ENCODE measurements at regions of chr5 and their contacts with region 1.

Region 1: DNA sequence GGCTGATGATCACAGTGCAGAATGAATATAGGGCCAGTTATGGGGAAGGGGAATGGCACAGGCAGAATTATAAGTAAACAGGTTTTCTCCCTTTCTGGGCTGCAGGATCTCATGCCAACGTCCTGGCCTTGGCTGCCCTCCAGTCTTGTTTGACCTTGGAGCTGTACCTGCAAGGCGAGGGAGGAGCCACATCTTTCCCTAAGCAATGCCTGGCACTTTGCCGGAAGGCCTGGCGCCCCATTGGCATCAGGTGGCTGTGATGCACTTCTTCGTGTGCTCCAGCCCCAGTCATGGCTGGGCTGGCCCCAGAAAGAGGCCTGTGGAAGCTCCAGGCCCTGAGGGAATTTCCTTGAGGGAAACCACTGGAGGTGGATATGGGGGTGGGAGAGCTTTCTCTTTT is 16.7 kb upstream of the IQGAP2 start:
- DNase-seq: no peak
- ATAC-seq: no peak
- H3K4me3 ChIP-seq: no peak overlapping the region
- H3K27ac ChIP-seq: no peak overlapping the region
- H3K4me1 ChIP-seq: peaks cover 86% of the 10 kb centered on the region
- H3K27me3 ChIP-seq: no peaks in the 10 kb centered on the region
- CTCF ChIP-seq: no peak
- EP300 ChIP-seq: no peak
- POLR2A ChIP-seq: no peak
- RAD21 ChIP-seq: no peak

Region 2: DNA sequence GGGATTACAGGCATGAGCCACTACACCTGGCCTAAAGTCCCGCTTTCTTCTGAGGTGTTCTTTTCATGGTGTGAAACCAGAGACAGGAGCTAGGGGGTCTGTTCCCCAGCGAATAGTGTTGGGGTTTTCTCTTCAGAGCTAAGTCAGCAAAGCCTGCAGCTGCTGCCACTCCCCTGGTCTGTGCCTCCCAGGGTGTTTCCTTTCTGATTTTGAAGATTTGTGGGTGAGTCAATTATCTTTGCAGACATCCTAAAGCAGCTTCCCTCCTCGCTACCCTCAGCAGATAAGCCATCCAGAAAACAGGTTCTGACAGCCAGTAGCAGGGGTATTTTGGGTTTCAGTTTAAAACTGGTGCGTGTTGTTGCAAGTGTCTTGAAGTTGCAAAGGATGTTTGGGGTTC is 55.2 kb before region 1 on chr5:
- CTCF ChIA-PET with region 1: no interaction called
- POLR2A ChIA-PET with region 1: no interaction called
- in situ Hi-C with region 1: no loop called
- intact Hi-C with region 1: loop called (anchors 5 kb)
- DNase-seq: no peak
- ATAC-seq: no peak
- H3K4me3 ChIP-seq: peak overlapping the region in 2 of 3 experiments; percentile 23 to 47; a peak in 3 of 6 replicates
- H3K27ac ChIP-seq: no peak overlapping the region
- H3K4me1 ChIP-seq: peaks cover 44% of the 10 kb centered on the region
- H3K27me3 ChIP-seq: peaks cover 0 to 15% of the 10 kb centered on the region in 2 experiments; a peak in 2 of 5 replicates
- CTCF ChIP-seq: no peak
- EP300 ChIP-seq: no peak
- POLR2A ChIP-seq: no peak
- RAD21 ChIP-seq: no peak